HCT116 (cell line): ENCODE measurements at regions of chr3 and their contacts with region 1.

Region 1: DNA sequence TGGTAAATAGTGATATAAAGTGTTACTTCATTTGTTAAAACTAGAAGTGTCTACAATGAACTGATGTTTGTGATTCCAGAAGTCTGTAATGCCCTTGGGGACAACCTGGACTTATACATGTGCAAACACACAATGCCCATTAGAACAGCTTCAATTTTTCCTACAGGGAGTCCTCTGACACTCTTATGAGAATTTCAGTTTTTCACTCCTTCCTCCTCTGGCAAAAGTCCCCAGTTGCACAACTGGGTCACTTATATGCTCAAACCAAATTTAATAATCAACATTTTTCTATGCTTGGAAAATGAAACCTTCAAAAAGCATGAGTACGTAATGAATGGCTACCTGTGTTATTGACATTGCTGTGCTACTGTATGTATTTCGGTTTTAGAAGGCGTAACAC is at the start of gene OR5H15:
- DNase-seq: no peak
- ATAC-seq: no peak
- H3K4me3 ChIP-seq: no peak within 1 kb of the TSS
- H3K27ac ChIP-seq: no peak within 1 kb of the TSS
- H3K4me1 ChIP-seq: no peaks in the 10 kb centered on the region
- H3K27me3 ChIP-seq: no peaks in the 10 kb centered on the region
- CTCF ChIP-seq: no peak
- POLR2A ChIP-seq: no peak
- RAD21 ChIP-seq: no peak
- total RNA-seq, gene OR5H15: not detected

Region 2: DNA sequence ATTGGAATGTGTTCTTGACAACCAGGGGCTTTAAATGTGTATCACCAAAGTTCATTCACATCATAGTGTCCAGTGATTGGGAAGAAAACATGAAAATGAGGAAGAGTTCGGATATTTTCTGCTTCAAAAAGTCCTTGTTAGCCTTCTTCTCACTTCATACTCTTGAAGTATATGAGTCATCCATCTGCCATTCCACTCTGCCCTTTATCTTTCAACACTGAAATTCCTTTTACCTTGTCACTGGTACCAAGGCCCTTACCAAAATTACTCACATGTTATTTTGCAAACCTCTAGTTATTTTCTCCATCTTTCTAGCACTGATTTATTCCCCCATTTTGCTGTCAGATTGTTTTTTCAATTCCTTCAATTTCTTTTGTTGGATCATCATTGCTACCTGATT is 32.6 kb after region 1 on chr3:
- CTCF ChIA-PET with region 1: interaction called, 4 read pairs
- POLR2A ChIA-PET with region 1: interaction called, 3 read pairs
- RAD21 ChIA-PET with region 1: no interaction called
- intact Hi-C with region 1: loop called (anchors 2 kb)
- DNase-seq: no peak
- ATAC-seq: no peak
- H3K4me3 ChIP-seq: no peak overlapping the region
- H3K27ac ChIP-seq: no peak overlapping the region
- H3K4me1 ChIP-seq: peaks cover 0 to 9% of the 10 kb centered on the region in 2 experiments; a peak in 2 of 4 replicates
- H3K27me3 ChIP-seq: no peaks in the 10 kb centered on the region
- CTCF ChIP-seq: no peak
- POLR2A ChIP-seq: no peak
- RAD21 ChIP-seq: no peak